CD14-positive monocyte (primary cell): ENCODE measurements at regions of chr9 and their contacts with region 1.

Region 1: DNA sequence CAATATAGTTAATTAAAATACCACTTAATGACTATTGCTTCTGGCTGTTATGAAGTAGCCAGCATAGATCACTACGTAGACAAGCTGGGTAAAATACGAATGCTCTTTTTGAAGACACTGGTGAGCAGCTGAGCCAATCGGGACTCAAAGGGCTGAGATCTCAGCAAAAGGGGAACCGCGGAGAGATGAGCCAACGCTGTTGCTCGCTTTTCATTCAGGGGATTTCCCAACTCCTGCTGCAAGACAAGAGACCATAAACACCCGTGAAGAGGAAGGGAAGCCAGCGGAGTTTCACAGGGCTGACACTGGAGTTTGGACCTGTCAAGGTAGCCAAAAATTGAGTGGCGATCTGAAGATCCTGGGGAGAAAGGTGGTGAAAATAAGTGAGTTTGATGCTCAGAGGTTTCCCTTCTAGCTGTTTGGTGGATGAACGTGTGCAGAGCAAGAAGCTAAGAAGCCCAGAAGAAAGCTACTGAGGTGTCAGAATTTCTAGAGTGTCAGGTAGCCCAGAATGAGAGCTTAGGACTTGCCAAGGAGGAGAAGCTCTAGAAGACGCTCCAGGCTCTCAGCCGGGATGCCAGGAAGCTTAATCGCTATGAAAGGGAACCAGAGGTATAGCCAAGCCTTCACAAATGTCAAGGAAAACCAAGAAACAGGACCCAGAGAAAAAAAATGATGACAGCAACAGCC is 79.6 kb upstream of the RNU6ATAC start:
- DNase-seq: peak; percentile 93 to 97 (median 97)
- H3K4me3 ChIP-seq: peak overlapping the region in 1 of 3 experiments; percentile 35
- H3K4me3 Mint-ChIP-seq: peak overlapping the region in 1 of 2 donors; percentile 86
- H3K27ac ChIP-seq: peak overlapping the region; percentile 24 to 27
- H3K27ac Mint-ChIP-seq: peak overlapping the region; percentile 66 to 95 (median 90)
- H3K4me1 ChIP-seq: peaks cover 25 to 33% of the 10 kb centered on the region in 2 donors
- H3K4me1 Mint-ChIP-seq: peaks cover 34% of the 10 kb centered on the region
- H3K27me3 ChIP-seq: peaks cover 0 to 13% of the 10 kb centered on the region in 2 donors
- H3K27me3 Mint-ChIP-seq: peaks cover 21 to 25% (median 23%) of the 10 kb centered on the region in 3 donors
- CTCF ChIP-seq: no peak

Region 2: GRCh38 chr9:133874056-133874642 is 369.8 kb before region 1 on chr9:
- intact Hi-C with region 1: no loop called
- DNase-seq: no peak
- H3K4me3 ChIP-seq: no peak overlapping the region
- H3K4me3 Mint-ChIP-seq: no peak overlapping the region
- H3K27ac ChIP-seq: no peak overlapping the region
- H3K27ac Mint-ChIP-seq: no peak overlapping the region
- H3K4me1 ChIP-seq: peaks cover 11% of the 10 kb centered on the region in 2 donors
- H3K4me1 Mint-ChIP-seq: peaks cover 13% of the 10 kb centered on the region
- H3K27me3 ChIP-seq: peaks cover 0 to 5% of the 10 kb centered on the region in 2 donors
- H3K27me3 Mint-ChIP-seq: peaks cover 2 to 21% (median 12%) of the 10 kb centered on the region in 3 donors
- CTCF ChIP-seq: no peak

Region 3: DNA sequence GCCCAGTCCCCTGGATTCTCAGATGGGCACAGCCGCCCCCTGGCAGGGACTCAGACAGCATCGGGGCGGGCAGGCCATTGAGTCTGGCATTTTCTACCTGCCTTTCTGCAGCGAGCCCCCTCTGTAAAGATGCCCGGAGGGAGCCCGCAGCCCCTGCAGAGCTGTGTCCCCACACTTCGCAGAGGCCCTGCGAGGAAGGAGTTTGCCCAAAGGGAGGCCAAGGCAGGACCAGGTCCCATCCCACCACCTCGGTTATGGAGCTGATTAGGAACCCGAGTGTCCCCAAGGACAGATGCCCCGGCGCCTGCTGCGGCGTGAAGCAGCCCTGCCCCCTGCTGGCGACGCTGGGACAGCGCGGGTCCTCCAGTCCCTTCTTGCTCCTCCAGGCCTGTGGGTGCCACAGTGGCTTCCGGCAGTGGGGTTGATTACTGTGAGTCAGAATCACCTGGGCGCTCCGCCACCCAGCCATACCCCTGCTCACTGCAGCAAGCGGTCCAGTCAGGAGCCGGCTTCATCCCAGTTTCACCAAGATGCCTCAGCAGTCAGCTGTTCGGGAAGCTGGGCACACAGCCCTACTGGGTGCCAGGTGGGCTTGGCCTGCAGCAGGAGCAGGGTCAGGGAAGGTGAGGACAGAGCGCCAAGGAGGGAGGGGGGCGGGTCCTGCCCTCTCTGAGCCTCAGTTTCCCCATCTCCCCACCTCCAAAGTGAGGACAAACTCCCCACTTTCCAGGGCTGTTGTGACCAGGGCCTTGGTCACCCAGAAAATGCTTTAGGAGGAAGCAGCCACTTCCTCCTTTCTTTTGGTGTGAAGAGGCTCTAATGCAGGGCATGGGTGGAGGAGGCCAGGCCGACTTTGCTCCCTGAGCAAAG is 199.5 kb after region 1 on chr9:
- intact Hi-C with region 1: loop called in 1 of 2 experiments (anchors 5 kb)
- DNase-seq: peak; percentile 81 to 91 (median 85)
- H3K4me3 ChIP-seq: peak overlapping the region in 1 of 3 experiments; percentile 45
- H3K4me3 Mint-ChIP-seq: peak overlapping the region; percentile 20 to 55
- H3K27ac ChIP-seq: peak overlapping the region; percentile 80 to 81
- H3K27ac Mint-ChIP-seq: peak overlapping the region; percentile 77 to 90 (median 87)
- H3K4me1 ChIP-seq: peaks cover 50 to 58% of the 10 kb centered on the region in 2 donors
- H3K4me1 Mint-ChIP-seq: peaks cover 57% of the 10 kb centered on the region
- H3K27me3 ChIP-seq: no peaks in the 10 kb centered on the region
- H3K27me3 Mint-ChIP-seq: peaks cover 2 to 17% (median 5%) of the 10 kb centered on the region in 3 donors
- CTCF ChIP-seq: peak; percentile 99